Uterus (tissue), 4 donors: ENCODE measurements at regions of chr19 and their contacts with region 1.

Region 1: DNA sequence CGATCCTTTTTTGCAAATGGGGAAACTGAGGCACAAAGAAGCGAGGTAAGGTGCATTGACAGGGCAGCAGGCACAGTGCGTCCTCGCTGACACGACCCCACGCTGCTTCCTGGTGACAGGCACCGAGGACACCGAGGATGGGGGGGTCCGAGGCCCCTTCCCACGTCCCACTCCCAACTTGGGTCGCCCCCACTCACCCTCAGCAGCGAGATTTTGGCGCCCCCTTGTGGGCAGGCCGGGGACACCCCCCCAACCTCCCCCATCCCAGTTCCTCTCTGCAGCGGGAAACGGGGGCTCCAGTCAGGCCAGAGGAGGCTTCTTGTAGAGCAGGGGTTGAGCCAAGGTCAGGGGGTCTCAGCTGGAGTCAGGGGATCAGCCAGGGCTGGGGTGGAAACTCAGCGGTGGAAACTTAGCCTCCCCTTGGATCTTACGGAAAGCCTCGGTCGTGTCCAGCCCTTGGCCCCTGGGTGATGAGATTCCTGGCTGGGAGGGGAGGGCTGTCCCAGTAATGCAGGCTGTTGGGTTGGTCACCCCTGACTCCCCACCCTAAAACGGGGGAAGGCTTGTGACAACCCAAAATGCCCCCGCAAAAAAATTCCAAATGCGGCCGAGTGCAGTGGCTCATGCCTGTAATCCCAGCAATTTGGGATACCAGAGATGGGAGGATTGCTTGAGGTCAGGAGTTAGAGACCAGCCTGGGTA is 8.2 kb downstream of the SMIM24 start:
- DNase-seq: peak in 1 of 2 donors; percentile 63
- H3K4me3 ChIP-seq: no peak overlapping the region
- H3K27ac ChIP-seq: no peak overlapping the region
- H3K4me1 ChIP-seq: peaks cover 0 to 3% of the 10 kb centered on the region in 2 donors
- H3K27me3 ChIP-seq: no peaks in the 10 kb centered on the region
- CTCF ChIP-seq: peak; percentile 76 to 93 (median 85)
- POLR2A ChIP-seq: peak in 1 of 2 donors; percentile 17

Region 2: GRCh38 chr19:3324321-3324856 is 147.7 kb before region 1 on chr19:
- intact Hi-C with region 1: loop called (anchors 2 kb)
- DNase-seq: no peak
- H3K4me3 ChIP-seq: no peak overlapping the region
- H3K27ac ChIP-seq: no peak overlapping the region
- H3K4me1 ChIP-seq: no peaks in the 10 kb centered on the region
- H3K27me3 ChIP-seq: no peaks in the 10 kb centered on the region
- CTCF ChIP-seq: peak; percentile 35 to 57 (median 55)
- POLR2A ChIP-seq: no peak

Region 3: DNA sequence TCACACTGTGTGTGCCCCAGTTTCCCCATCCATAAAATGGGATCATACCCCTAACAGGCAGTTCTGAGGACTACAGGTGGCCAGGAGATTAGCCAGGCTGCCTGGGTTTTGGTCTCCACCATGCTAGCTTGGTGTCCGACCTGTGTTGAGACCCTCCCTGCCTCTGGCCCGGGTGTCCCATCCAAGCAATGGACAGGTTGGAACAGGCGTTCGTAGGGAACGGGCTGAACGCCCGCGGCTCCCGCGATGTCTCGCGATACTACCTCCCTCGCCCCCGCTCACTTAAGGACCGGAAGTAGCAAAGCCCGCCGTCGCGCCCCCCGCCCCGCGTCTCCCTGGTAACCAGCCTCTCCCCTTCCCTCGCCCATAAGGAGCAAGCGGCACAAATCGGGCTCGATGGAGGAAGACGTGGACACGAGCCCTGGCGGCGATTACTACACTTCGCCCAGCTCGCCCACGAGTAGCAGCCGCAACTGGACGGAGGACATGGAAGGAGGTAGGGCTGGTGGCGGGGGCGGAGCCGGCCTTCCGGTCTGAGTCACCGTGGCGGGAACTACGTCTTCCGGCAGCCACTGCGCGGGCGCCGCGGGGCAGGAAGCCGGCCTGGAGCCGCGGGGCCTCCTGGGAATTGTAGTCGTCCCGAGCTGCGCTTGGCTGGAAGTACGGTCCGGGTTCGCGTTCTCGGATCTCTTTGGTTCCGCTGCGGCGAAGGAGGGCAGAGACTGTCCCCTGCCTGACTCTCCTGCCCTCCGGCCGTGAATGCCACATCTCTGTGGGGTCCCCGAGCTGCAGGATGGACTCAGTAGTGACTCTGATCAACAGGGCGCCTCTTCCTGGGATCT is 37.2 kb before region 1 on chr19:
- intact Hi-C with region 1: loop called (anchors 2 kb)
- DNase-seq: peak; percentile 95 to 96
- H3K4me3 ChIP-seq: peak overlapping the region; percentile 35 to 38
- H3K27ac ChIP-seq: peak overlapping the region; percentile 86 to 90
- H3K4me1 ChIP-seq: peaks cover 0 to 12% of the 10 kb centered on the region in 2 donors
- H3K27me3 ChIP-seq: no peaks in the 10 kb centered on the region
- CTCF ChIP-seq: peak in 2 of 4 experiments; percentile 18 to 24
- POLR2A ChIP-seq: peak in 1 of 2 donors; percentile 35